CD4-positive, alpha-beta memory T cell (primary cell): ENCODE measurements at regions of chr2 and their contacts with region 1.

Region 1: GRCh38 chr2:169694113-169694903 is at the starts of genes CFAP210 and PHOSPHO2:
- DNase-seq: peak; percentile 98 to 99 (median 99)
- H3K4me3 ChIP-seq: peak within 1 kb of the TSS; percentile 37 to 69
- H3K4me3 Mint-ChIP-seq: peak within 1 kb of the TSS; percentile 88 to 96 (median 92)
- H3K27ac ChIP-seq: peak within 1 kb of the TSS; percentile 72
- H3K27ac Mint-ChIP-seq: peak within 1 kb of the TSS; percentile 93 to 100 (median 99)
- H3K4me1 ChIP-seq: peaks cover 15% of the 10 kb centered on the region
- H3K4me1 Mint-ChIP-seq: peaks cover 12 to 21% (median 16%) of the 10 kb centered on the region in 4 donors
- H3K27me3 ChIP-seq: no peaks in the 10 kb centered on the region
- H3K27me3 Mint-ChIP-seq: peaks cover 5 to 8% of the 10 kb centered on the region in 2 donors
- total RNA-seq, gene CFAP210: not detected
- total RNA-seq, gene PHOSPHO2: 7.2 to 7.4 TPM

Region 2: DNA sequence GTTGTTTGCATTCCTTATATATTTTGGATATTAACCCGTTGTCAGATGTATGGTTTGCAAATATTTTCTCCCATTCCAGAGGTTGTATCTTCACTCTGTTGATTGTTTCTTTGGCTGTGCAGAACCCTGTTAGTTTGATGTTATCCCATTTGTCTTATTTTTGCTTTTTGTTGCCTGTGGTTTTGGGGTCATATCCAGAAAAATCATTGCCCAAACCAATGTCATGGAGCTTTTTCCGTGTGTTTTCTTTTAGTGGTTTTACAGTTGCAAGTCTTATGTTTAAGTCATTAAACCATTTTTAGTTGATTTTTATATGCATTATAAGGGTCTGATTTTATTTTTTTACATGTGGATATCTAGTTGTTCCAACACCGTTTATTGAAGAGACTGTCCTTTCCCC is 74.4 kb before region 1 on chr2:
- CTCF ChIA-PET with region 1: no interaction called
- POLR2A ChIA-PET with region 1: no interaction called
- intact Hi-C with region 1: no loop called
- DNase-seq: no peak
- H3K4me3 ChIP-seq: no peak overlapping the region
- H3K4me3 Mint-ChIP-seq: no peak overlapping the region
- H3K27ac ChIP-seq: no peak overlapping the region
- H3K27ac Mint-ChIP-seq: no peak overlapping the region
- H3K4me1 ChIP-seq: no peaks in the 10 kb centered on the region
- H3K4me1 Mint-ChIP-seq: peaks cover 10 to 41% (median 34%) of the 10 kb centered on the region in 4 donors
- H3K27me3 ChIP-seq: no peaks in the 10 kb centered on the region
- H3K27me3 Mint-ChIP-seq: no peaks in the 10 kb centered on the region

Region 3: GRCh38 chr2:169798718-169799592 is 104.6 kb after region 1 on chr2 and contains the start of gene SSB:
- CTCF ChIA-PET with region 1: no interaction called
- POLR2A ChIA-PET with region 1: interaction called, 10 read pairs
- intact Hi-C with region 1: loop called (anchors 1 kb)
- DNase-seq: peak; percentile 87 to 95 (median 89)
- H3K4me3 ChIP-seq: peak within 1 kb of the TSS; percentile 45 to 95
- H3K4me3 Mint-ChIP-seq: peak within 1 kb of the TSS; percentile 84 to 95 (median 92)
- H3K27ac ChIP-seq: peak within 1 kb of the TSS; percentile 85
- H3K27ac Mint-ChIP-seq: peak within 1 kb of the TSS; percentile 93 to 97 (median 95)
- H3K4me1 ChIP-seq: peaks cover 43% of the 10 kb centered on the region
- H3K4me1 Mint-ChIP-seq: peaks cover 16 to 45% (median 33%) of the 10 kb centered on the region in 4 donors
- H3K27me3 ChIP-seq: no peaks in the 10 kb centered on the region
- H3K27me3 Mint-ChIP-seq: peaks cover 0 to 5% of the 10 kb centered on the region in 2 donors
- total RNA-seq, gene SSB: 112 to 114 TPM